Endothelial cell of umbilical vein (primary cell): ENCODE measurements at regions of chr15 and their contacts with region 1.

Region 1: DNA sequence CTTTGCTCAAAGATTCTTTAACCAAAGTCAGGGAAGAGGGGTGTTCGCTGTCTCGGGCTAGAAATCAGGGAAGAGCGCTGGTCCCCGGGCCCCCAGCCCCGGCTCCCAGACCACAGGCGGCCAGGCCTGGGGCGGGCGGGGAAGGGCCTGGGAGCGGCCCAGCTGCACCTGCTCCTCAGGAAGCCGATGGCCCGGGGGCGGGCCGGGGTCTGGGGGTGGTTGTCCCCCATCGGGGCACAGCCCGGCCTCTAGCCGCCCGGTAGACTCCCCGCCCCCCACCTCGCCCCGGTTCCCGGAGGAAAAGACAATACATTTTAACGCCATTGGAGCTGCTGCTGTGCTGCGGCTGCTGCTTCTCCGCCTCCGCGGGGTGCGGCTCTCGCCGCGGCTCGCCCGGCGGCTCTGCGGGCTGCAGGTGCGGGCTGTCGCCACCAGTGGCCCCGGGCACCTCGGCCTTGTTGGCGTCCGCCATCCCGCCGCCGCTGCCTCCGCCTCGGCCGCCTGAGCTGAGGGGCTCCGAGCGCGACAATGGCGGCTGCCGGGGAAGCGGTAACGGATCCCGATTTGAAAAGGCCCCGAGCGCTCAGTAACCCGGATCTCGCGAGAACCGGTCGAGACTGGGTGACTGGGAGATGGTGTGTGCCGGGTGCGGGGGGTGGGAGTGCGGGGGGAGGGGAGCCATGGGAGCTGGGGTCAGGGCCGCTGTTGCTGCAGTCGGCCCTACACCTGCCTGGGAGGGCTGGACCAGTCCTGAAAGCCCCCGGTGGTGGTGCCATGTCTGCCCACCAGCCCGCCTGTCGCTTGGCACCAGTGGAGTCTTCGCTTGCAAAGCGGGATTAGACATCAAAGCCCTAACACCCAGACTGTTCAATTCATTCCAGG is at the start of gene MYEF2:
- DNase-seq: peak; percentile 78
- H3K4me3 ChIP-seq: peak within 1 kb of the TSS; percentile 14 to 68 (median 60)
- H3K27ac ChIP-seq: peak within 1 kb of the TSS; percentile 84
- H3K4me1 ChIP-seq: peaks cover 12% of the 10 kb centered on the region
- H3K27me3 ChIP-seq: peaks cover 0 to 2% of the 10 kb centered on the region in 2 experiments
- CTCF ChIP-seq: no peak
- POLR2A ChIP-seq: peak; percentile 60
- total RNA-seq, gene MYEF2: 54.8 and 62.5 TPM in 2 replicates

Region 2: GRCh38 chr15:48144889-48145288 is 33.1 kb before region 1 on chr15:
- CTCF ChIA-PET with region 1: no interaction called
- POLR2A ChIA-PET with region 1: interaction called, 6 read pairs
- dilution Hi-C with region 1: no loop called
- intact Hi-C with region 1: loop called (anchors 1 kb)
- DNase-seq: no peak
- H3K4me3 ChIP-seq: no peak overlapping the region
- H3K27ac ChIP-seq: peak overlapping the region; percentile 18
- H3K4me1 ChIP-seq: peaks cover 28% of the 10 kb centered on the region
- H3K27me3 ChIP-seq: no peaks in the 10 kb centered on the region
- CTCF ChIP-seq: no peak
- POLR2A ChIP-seq: no peak

Region 3: GRCh38 chr15:48330855-48331795 is 153.1 kb after region 1 on chr15 and contains the start of gene DUT:
- CTCF ChIA-PET with region 1: no interaction called
- POLR2A ChIA-PET with region 1: no interaction called
- dilution Hi-C with region 1: no loop called
- intact Hi-C with region 1: loop called (anchors 1 kb)
- DNase-seq: peak; percentile 86
- H3K4me3 ChIP-seq: peak within 1 kb of the TSS; percentile 65 to 92 (median 90)
- H3K27ac ChIP-seq: peak within 1 kb of the TSS; percentile 92
- H3K4me1 ChIP-seq: peaks cover 21% of the 10 kb centered on the region
- H3K27me3 ChIP-seq: no peaks in the 10 kb centered on the region
- CTCF ChIP-seq: no peak
- POLR2A ChIP-seq: peak; percentile 96
- total RNA-seq, gene DUT: 127 and 135 TPM in 2 replicates

Region 4: GRCh38 chr15:50083424-50084025 is 1905.5 kb after region 1 on chr15:
- CTCF ChIA-PET with region 1: no interaction called
- POLR2A ChIA-PET with region 1: no interaction called
- dilution Hi-C with region 1: no loop called
- intact Hi-C with region 1: no loop called
- DNase-seq: no peak
- H3K4me3 ChIP-seq: no peak overlapping the region
- H3K27ac ChIP-seq: no peak overlapping the region
- H3K4me1 ChIP-seq: no peaks in the 10 kb centered on the region
- H3K27me3 ChIP-seq: no peaks in the 10 kb centered on the region
- CTCF ChIP-seq: no peak
- POLR2A ChIP-seq: no peak